Activated naive CD4-positive, alpha-beta T cell treated with anti-CD3 and anti-CD28 coated beads for 36 hours (primary cell): ENCODE measurements at regions of chr2 and their contacts with region 1.

Region 1: GRCh38 chr2:15939854-15940660 is at the start of gene MYCN:
- DNase-seq: peak; percentile 68
- H3K4me3 Mint-ChIP-seq: peak within 1 kb of the TSS; percentile 58
- H3K27ac Mint-ChIP-seq: no peak within 1 kb of the TSS
- H3K4me1 Mint-ChIP-seq: peaks cover 31% of the 10 kb centered on the region
- H3K27me3 Mint-ChIP-seq: peaks cover 51% of the 10 kb centered on the region
- total RNA-seq, gene MYCN: 0.19 TPM in 1 of 2 experiments, not detected in the other

Region 2: GRCh38 chr2:15965564-15966019 is 25.5 kb after region 1 on chr2:
- CTCF ChIA-PET with region 1: interaction called, 14 read pairs
- intact Hi-C with region 1: loop called (anchors 1 kb)
- DNase-seq: peak; percentile 85
- H3K4me3 Mint-ChIP-seq: peak overlapping the region; percentile 1
- H3K27ac Mint-ChIP-seq: peak overlapping the region; percentile 58
- H3K4me1 Mint-ChIP-seq: peaks cover 57% of the 10 kb centered on the region
- H3K27me3 Mint-ChIP-seq: peaks cover 2% of the 10 kb centered on the region

Region 3: GRCh38 chr2:16096962-16097361 is 156.9 kb after region 1 on chr2:
- CTCF ChIA-PET with region 1: interaction called, 3 read pairs
- intact Hi-C with region 1: loop called (anchors 5 kb)
- DNase-seq: no peak
- H3K4me3 Mint-ChIP-seq: no peak overlapping the region
- H3K27ac Mint-ChIP-seq: no peak overlapping the region
- H3K4me1 Mint-ChIP-seq: no peaks in the 10 kb centered on the region
- H3K27me3 Mint-ChIP-seq: no peaks in the 10 kb centered on the region

Region 4: DNA sequence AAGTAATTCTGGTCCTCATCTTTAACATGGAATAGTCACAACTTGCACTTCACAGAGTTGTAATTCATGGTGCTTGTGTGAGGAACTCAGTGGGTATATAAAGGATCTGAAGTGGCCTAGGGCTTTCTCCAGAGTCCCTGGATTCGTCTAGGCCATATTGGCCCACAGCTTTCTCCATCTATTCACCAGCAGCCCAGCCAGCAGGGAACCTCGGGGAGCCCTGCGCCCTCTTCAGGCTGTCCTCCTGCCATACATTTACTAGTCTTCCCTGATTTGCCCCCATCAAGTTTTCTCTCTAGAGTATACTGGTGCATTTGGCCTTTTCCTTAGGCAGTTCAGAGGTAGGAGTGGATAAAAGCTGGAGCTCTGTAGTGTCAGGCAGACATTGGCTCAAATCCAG is 278.6 kb after region 1 on chr2:
- CTCF ChIA-PET with region 1: interaction called, 7 read pairs
- intact Hi-C with region 1: loop called (anchors 1 kb)
- DNase-seq: peak; percentile 30
- H3K4me3 Mint-ChIP-seq: no peak overlapping the region
- H3K27ac Mint-ChIP-seq: no peak overlapping the region
- H3K4me1 Mint-ChIP-seq: no peaks in the 10 kb centered on the region
- H3K27me3 Mint-ChIP-seq: no peaks in the 10 kb centered on the region

Region 5: DNA sequence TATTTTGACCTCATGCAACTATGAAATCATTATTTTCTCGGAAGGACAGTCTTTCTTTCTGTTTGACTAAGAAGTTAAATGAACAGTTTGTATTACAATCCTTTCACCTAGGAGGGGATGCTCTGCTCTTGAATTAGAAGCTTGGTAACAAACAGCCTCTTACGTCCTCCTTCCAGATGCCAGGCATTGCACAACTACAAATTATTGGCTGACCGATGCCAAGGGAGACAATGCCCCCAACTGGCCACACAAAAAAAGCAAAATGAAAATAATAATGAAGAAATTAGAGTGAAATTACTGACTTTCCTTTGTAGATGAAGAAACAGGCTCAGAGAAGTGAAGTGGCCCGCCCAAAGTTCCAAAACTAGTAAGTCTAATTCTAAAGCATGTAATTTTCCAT is 547.6 kb after region 1 on chr2:
- CTCF ChIA-PET with region 1: interaction called, 5 read pairs
- intact Hi-C with region 1: loop called (anchors 5 kb)
- DNase-seq: no peak
- H3K4me3 Mint-ChIP-seq: no peak overlapping the region
- H3K27ac Mint-ChIP-seq: no peak overlapping the region
- H3K4me1 Mint-ChIP-seq: no peaks in the 10 kb centered on the region
- H3K27me3 Mint-ChIP-seq: peaks cover 19% of the 10 kb centered on the region

Region 6: DNA sequence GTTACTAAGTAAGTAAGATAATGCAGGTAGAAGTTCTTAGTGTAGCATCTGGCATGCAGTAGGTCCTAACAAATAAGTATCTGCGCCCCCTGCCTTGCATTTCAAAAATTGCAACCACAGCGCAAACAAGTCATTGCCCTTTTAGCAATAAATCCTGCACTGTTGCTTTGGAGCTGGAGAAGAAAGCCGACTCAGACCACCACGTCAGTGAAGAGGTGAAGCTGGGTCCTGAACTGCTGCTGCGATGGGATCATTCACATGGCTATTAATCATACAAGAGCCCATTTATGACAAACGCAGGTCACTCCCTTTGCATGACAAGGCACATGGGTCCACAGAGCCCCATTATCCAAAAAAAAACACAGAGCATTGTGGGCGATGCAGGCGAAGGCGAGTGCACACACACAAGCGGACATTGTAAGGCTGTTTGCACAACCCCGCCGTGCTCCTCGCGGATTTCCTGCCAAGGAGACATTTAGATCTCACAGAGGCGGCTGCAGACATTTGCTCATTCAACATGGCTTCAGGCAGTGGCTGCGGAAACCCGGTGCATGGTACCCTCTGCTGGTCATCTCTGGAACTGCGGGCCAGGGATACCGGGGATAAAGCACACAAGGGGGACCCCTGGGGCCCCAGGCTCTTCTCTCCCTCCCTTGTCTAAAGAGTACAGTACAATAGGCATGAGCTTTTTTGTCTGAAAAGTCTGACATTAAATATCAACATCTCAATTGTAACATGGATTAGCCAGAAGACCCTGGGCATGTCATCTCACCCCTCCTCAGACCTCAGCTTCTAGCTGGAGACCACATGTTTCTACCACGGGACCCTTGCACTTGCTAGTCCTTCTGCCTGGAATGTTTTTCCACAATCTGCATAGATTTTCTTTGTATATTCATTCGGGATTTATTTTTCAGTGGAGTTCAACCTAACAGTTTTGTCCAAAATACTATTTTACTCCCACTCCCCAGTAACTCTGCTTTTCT is 668.9 kb after region 1 on chr2:
- CTCF ChIA-PET with region 1: interaction called, 9 read pairs
- intact Hi-C with region 1: loop called (anchors 1 kb)
- DNase-seq: peak; percentile 93
- H3K4me3 Mint-ChIP-seq: peak overlapping the region; percentile 78
- H3K27ac Mint-ChIP-seq: no peak overlapping the region
- H3K4me1 Mint-ChIP-seq: no peaks in the 10 kb centered on the region
- H3K27me3 Mint-ChIP-seq: peaks cover 9% of the 10 kb centered on the region

Region 7: DNA sequence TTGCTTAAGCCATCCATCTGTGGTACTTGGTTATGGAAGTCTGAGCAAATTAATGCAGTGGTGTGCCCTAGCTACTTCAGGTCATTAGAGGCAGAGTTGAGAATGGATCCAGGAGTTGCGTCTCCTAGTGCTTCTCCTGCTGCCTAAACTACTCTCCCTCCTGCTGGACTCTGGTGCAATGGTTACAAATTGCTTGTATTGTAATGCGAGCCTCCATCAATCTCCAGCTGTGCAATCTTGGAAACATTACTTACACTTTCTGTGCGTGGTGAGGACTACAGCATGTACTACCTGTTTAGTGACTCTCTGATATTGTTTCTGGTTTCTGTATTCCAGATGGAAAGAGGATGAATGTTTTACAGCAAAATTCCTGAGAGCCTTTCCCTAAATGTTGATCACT is 844.6 kb after region 1 on chr2:
- CTCF ChIA-PET with region 1: no interaction called
- intact Hi-C with region 1: no loop called
- DNase-seq: no peak
- H3K4me3 Mint-ChIP-seq: no peak overlapping the region
- H3K27ac Mint-ChIP-seq: no peak overlapping the region
- H3K4me1 Mint-ChIP-seq: no peaks in the 10 kb centered on the region
- H3K27me3 Mint-ChIP-seq: no peaks in the 10 kb centered on the region